ENCODE measurements at regions of chr7 and their contacts with region 1.

Region 1: DNA sequence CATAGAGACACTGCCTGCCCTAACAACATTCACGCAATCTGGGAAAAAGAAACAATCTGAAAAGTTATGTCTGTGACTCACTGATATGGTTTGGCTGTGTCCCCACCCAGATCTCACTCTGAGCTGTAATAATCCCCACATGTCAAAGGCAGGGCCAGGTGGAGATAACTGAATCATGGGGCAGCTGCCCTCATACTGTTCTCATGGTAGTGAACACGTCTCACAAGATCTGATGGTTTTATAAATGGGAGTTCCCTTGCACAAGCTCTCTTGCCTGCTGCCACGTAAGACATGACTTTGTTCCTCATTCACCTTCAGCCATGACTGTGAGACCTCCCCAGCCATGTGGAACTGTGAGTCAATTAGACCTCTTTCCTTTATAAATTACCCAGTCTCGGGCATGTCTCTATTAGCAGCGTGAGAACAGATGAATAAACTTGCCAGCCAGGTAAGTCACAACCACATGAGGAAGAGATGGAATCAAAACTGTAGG is 341.5 kb upstream of the AOAH start:
- DNase-seq: peak; percentile 47
- H3K4me3 Mint-ChIP-seq: no peak overlapping the region
- H3K27ac Mint-ChIP-seq: peak overlapping the region; percentile 48
- H3K4me1 Mint-ChIP-seq: peaks cover 50% of the 10 kb centered on the region
- H3K27me3 Mint-ChIP-seq: no peaks in the 10 kb centered on the region

Region 2: GRCh38 chr7:36736899-36737211 is 329.0 kb before region 1 on chr7:
- CTCF ChIA-PET with region 1: no interaction called
- intact Hi-C with region 1: loop called (anchors 1 kb)
- DNase-seq: no peak
- H3K4me3 Mint-ChIP-seq: no peak overlapping the region
- H3K27ac Mint-ChIP-seq: no peak overlapping the region
- H3K4me1 Mint-ChIP-seq: peaks cover 27% of the 10 kb centered on the region
- H3K27me3 Mint-ChIP-seq: no peaks in the 10 kb centered on the region

Region 3: DNA sequence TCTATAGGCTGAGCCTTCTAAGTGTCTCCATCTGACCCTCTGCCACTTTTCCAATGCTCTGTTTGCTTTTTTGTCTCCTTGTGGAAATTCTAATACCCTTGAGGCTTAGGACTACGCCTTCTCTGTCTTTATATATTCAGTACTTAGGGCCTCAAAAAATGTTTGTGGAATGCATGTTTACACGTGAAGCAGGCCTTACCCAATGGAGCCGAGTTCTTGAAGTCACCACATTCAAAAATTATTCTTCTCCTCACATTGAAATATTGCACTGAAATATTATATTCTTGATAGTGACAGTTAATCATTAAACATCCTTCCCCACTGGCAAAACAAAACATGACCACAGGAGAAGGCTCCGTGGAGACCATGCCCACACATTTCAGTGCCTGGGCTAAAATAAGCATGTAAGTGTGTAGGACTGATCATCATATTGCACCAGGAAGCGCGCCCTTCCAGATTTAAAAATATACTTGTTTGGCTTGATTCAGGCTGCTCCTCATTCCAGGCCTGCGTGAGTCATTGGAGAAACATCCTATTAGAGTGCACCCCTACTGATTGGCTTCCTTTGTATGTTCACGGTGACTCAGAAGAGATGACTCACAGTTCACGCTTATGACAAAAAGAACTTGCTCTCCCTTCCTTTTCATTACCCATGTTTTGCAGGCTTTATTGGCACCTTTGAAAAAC is 34.1 kb before region 1 on chr7:
- CTCF ChIA-PET with region 1: interaction called, 3 read pairs
- intact Hi-C with region 1: loop called (anchors 1 kb)
- DNase-seq: peak; percentile 79
- H3K4me3 Mint-ChIP-seq: no peak overlapping the region
- H3K27ac Mint-ChIP-seq: peak overlapping the region; percentile 50
- H3K4me1 Mint-ChIP-seq: peaks cover 60% of the 10 kb centered on the region
- H3K27me3 Mint-ChIP-seq: no peaks in the 10 kb centered on the region

Measured in activated naive CD4-positive, alpha-beta T cell treated with anti-CD3 and anti-CD28 coated beads for 36 hours (primary cell).